ENCODE measurements at regions of chr2 and their contacts with region 1.

Region 1: DNA sequence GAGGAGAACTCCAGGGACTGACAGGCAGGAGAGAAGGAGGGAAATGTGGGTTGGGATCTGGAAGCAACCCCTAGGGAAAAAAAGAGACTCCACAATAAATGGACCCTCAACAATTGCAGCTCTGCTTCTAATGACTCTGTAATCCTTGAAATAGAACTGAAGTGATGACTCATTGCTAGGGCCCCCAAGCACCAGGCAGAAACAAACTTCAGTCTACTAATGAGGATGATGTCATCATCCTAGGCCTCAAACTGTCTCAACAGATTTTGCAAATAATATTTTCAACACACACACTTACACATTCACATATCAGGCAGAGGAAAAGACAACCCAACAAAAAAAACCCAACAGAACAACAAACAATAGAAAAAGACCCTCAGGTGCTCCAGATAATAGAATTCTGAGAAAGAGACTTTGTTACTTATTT is 143.3 kb downstream of the HDAC4 start:
- DNase-seq: peak; percentile 44
- H3K4me3 Mint-ChIP-seq: no peak overlapping the region
- H3K27ac Mint-ChIP-seq: peak overlapping the region; percentile 79
- H3K4me1 Mint-ChIP-seq: peaks cover 86% of the 10 kb centered on the region
- H3K27me3 Mint-ChIP-seq: no peaks in the 10 kb centered on the region

Region 2: GRCh38 chr2:239169311-239170048 is 88.0 kb before region 1 on chr2:
- CTCF ChIA-PET with region 1: no interaction called
- POLR2A ChIA-PET with region 1: no interaction called
- intact Hi-C with region 1: loop called (anchors 5 kb)
- DNase-seq: no peak
- H3K4me3 Mint-ChIP-seq: no peak overlapping the region
- H3K27ac Mint-ChIP-seq: no peak overlapping the region
- H3K4me1 Mint-ChIP-seq: peaks cover 20% of the 10 kb centered on the region
- H3K27me3 Mint-ChIP-seq: no peaks in the 10 kb centered on the region

Region 3: DNA sequence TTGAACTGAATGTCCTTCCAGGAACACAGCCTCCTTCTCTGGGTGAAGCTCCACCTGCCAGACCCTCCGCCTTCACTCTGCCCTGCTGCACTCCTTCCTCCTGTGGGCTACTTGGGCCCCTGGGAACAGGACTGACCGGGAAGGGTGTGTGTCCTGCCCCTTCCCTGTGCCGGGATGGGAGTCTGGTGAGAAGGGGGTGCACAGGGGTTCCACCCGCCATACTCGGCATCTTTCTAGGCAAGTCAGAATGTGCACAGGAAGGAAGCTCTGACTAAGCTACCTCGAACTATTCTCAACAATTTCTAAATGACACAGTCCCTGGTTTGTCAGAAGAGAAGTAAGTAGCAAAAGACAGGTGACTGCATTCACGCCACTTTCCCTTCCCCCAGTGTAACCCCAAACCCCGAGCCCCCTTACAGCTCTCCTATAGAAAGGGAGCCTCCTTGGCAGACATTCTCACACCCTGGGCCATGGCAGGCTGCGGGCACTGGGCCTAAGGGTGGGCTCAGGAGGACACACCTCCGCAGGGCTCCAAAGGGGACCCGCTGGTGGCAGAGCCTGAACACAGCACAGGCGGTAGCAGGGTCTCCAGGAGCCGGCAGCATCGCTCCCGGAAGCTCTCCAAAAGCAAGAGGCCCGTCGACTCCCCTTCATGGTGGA is 40.8 kb before region 1 on chr2:
- CTCF ChIA-PET with region 1: no interaction called
- POLR2A ChIA-PET with region 1: interaction called, 3 read pairs
- intact Hi-C with region 1: loop called (anchors 1 kb)
- DNase-seq: peak; percentile 69
- H3K4me3 Mint-ChIP-seq: peak overlapping the region; percentile 74
- H3K27ac Mint-ChIP-seq: peak overlapping the region; percentile 88
- H3K4me1 Mint-ChIP-seq: peaks cover 64% of the 10 kb centered on the region
- H3K27me3 Mint-ChIP-seq: no peaks in the 10 kb centered on the region

Region 4: DNA sequence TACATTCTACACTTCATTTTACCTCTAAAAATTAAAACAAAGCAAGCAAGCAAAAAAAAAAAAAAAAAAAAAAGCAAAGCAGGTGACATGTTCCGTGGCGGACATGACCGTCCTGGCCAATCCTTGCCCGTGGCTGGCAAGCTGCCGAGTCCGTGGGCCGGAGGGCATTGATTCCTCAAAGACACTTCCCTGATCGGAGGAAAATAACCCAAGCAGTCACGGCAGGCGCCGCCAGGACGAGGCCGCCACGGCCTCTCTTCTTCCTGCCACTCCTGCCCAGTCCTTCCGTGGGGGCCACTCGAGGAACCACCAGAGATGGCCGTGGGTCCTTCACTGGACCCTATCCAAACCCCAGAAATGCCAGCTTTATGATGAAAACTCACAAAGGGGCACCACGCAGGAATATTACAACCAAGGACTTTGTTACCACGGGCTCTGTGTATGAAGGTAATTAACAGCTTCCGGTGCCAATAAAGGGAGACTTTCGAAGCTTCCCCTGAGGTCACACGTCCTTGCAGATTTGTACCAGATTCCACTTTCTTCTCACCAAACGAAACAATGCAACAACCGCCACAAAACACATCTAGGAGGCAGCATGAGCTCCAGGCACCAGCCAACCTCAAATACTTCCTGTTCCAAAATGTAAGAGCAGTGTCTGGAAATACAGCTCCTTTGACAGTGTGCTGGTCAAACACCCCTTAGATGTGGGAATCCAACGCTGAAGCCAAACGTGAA is 27.0 kb before region 1 on chr2:
- CTCF ChIA-PET with region 1: no interaction called
- POLR2A ChIA-PET with region 1: no interaction called
- intact Hi-C with region 1: loop called (anchors 2 kb)
- DNase-seq: peak; percentile 36
- H3K4me3 Mint-ChIP-seq: peak overlapping the region; percentile 45
- H3K27ac Mint-ChIP-seq: peak overlapping the region; percentile 79
- H3K4me1 Mint-ChIP-seq: peaks cover 71% of the 10 kb centered on the region
- H3K27me3 Mint-ChIP-seq: no peaks in the 10 kb centered on the region

Measured in activated CD4-positive, alpha-beta memory T cell treated with anti-CD3 and anti-CD28 coated beads for 36 hours (primary cell).